ENCODE measurements at regions of chr11 and their contacts with region 1.

Region 1: GRCh38 chr11:119144825-119145486 is 3.9 kb upstream of the ABCG4 start:
- DNase-seq: peak in 4 of 5 donors; percentile 42 to 65 (median 47)
- ATAC-seq: peak; percentile 67 to 91 (median 81)
- H3K4me3 ChIP-seq: no peak overlapping the region
- H3K27ac ChIP-seq: no peak overlapping the region
- H3K4me1 ChIP-seq: peaks cover 0 to 23% (median 7%) of the 10 kb centered on the region in 12 donors
- H3K27me3 ChIP-seq: peaks cover 0 to 39% (median 0%) of the 10 kb centered on the region in 9 donors
- CTCF ChIP-seq: peak; percentile 46 to 72 (median 62)
- POLR2A ChIP-seq: no peak

Region 2: DNA sequence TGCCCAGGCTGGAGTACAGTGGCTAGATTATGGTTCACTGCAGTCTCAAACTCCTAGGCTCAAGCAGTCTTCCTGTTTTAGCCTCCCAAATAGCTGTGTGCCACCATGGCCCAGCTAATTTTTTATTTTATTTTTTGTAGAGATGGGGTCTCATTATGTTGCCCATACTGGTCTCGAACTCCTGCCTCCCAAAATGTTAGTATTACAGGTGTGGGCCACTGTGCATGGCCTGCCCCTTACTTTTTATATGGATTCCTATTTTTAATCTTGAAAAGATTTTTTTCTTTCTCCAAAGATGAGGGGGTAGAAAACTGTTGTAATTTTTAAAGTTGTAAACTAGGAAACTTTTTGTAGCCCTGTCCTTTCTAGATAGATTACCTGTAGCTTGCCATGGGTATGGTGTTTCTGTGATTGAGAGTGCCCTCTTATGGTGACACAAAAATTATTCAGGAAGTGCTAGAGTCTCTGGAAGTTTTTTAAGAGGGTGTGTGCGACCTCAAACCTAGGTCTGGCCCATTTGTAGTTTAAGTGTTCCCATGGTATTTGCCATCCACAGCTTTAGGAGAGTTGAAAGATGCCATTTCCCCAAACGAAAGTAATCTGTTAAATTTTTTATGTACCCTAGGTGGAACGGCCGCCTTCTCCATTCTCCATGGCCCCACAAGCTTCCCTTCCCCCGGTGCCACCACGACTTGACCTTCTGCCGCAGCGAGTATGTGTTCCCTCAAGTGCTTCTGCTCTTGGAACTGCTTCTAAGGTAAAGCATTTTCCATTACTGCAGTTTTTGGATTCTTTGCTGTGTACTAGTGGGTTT is 139.6 kb after region 1 on chr11:
- intact Hi-C with region 1: loop called in 1 of 10 experiments (anchors 10 kb)
- DNase-seq: no peak
- ATAC-seq: peak; percentile 58 to 82 (median 63)
- H3K4me3 ChIP-seq: no peak overlapping the region
- H3K27ac ChIP-seq: no peak overlapping the region
- H3K4me1 ChIP-seq: peaks cover 0 to 7% (median 0%) of the 10 kb centered on the region in 12 donors
- H3K27me3 ChIP-seq: no peaks in the 10 kb centered on the region
- CTCF ChIP-seq: peak; percentile 24 to 65 (median 46)
- POLR2A ChIP-seq: no peak

Region 3: DNA sequence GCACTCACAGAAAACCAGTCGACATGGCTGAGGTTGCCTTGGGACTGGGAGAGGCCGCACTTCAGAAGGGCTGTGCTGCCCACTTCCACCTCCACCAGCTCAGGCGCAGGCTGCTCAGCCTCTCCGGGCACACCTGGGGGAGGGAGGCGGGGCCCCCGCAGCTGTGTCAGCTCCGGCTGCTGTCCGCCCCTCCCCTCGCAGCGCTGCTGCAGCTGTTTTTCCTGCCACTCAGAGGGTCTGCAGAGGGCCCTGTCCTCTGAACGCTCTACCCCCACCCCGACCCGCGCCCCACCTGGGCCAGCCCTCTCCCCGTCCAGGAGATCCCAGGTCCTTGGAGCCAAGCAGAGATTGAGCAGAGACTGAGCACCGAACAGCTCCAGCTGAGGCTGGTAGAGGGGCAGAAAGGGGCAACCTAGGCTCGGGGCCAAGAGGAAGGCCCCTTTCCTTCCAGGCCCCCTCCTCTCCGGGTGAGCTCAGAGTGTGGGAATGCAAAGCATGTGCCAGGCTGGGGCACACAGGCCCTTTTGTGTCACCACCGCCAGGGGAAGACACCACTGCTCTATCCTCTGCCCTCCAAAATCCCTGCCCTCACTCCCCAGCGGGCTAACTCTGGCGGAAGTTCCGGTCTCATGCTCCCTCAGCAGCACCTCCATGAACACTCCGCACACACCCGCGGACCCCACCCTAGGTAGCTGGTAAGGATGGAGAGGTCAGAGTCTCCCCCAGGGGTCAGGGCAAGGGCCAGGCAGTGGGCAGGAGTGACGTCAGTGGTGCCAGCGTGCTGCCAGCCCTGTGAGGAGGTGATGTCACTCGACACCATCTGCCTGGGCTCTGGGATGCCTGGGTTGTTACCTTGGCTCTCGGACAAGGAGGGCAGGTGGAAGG is 170.4 kb after region 1 on chr11:
- intact Hi-C with region 1: loop called in 1 of 10 experiments (anchors 5 kb)
- DNase-seq: peak; percentile 55 to 69 (median 61)
- ATAC-seq: peak; percentile 23 to 46 (median 26)
- H3K4me3 ChIP-seq: peak overlapping the region; percentile 25 to 86 (median 75)
- H3K27ac ChIP-seq: peak overlapping the region; percentile 81 to 99 (median 93)
- H3K4me1 ChIP-seq: peaks cover 0 to 66% (median 40%) of the 10 kb centered on the region in 12 donors
- H3K27me3 ChIP-seq: peaks cover 0 to 33% (median 0%) of the 10 kb centered on the region in 9 donors
- CTCF ChIP-seq: peak in 8 of 12 donors; percentile 7 to 34 (median 10)
- POLR2A ChIP-seq: no peak

Region 4: GRCh38 chr11:119334174-119334930 is 189.4 kb after region 1 on chr11 and contains the start of gene RNF26:
- intact Hi-C with region 1: loop called in 1 of 10 experiments (anchors 10 kb)
- DNase-seq: peak; percentile 94 to 96 (median 96)
- ATAC-seq: peak; percentile 92 to 96 (median 93)
- H3K4me3 ChIP-seq: peak within 1 kb of the TSS; percentile 76 to 99 (median 86)
- H3K27ac ChIP-seq: peak within 1 kb of the TSS; percentile 50 to 91 (median 82)
- H3K4me1 ChIP-seq: peaks cover 5 to 47% (median 32%) of the 10 kb centered on the region in 12 donors
- H3K27me3 ChIP-seq: peaks cover 0 to 3% (median 0%) of the 10 kb centered on the region in 9 donors
- CTCF ChIP-seq: no peak
- POLR2A ChIP-seq: peak; percentile 11 to 48
- total RNA-seq, gene RNF26: 8.1 to 22.4 (median 11.8) TPM